ENCODE measurements at regions of chr15 and their contacts with region 1.

Region 1: GRCh38 chr15:66851226-66852071 is 149.4 kb downstream of the SMAD6 start:
- DNase-seq: peak; percentile 72
- ATAC-seq: peak; percentile 93
- H3K4me3 ChIP-seq: no peak overlapping the region
- H3K27ac ChIP-seq: no peak overlapping the region
- H3K4me1 ChIP-seq: peaks cover 16% of the 10 kb centered on the region
- H3K27me3 ChIP-seq: no peaks in the 10 kb centered on the region
- CTCF ChIP-seq: peak; percentile 78

Region 2: GRCh38 chr15:66558300-66558699 is 293.1 kb before region 1 on chr15:
- CTCF ChIA-PET with region 1: no interaction called
- POLR2A ChIA-PET with region 1: no interaction called
- intact Hi-C with region 1: no loop called
- DNase-seq: no peak
- ATAC-seq: no peak
- H3K4me3 ChIP-seq: no peak overlapping the region
- H3K27ac ChIP-seq: no peak overlapping the region
- H3K4me1 ChIP-seq: no peaks in the 10 kb centered on the region
- H3K27me3 ChIP-seq: no peaks in the 10 kb centered on the region
- CTCF ChIP-seq: no peak

Region 3: GRCh38 chr15:66603301-66604179 is 247.9 kb before region 1 on chr15:
- CTCF ChIA-PET with region 1: no interaction called
- POLR2A ChIA-PET with region 1: no interaction called
- intact Hi-C with region 1: loop called (anchors 1 kb)
- DNase-seq: peak; percentile 63
- ATAC-seq: peak; percentile 80
- H3K4me3 ChIP-seq: no peak overlapping the region
- H3K27ac ChIP-seq: no peak overlapping the region
- H3K4me1 ChIP-seq: no peaks in the 10 kb centered on the region
- H3K27me3 ChIP-seq: no peaks in the 10 kb centered on the region
- CTCF ChIP-seq: peak; percentile 74

Region 4: DNA sequence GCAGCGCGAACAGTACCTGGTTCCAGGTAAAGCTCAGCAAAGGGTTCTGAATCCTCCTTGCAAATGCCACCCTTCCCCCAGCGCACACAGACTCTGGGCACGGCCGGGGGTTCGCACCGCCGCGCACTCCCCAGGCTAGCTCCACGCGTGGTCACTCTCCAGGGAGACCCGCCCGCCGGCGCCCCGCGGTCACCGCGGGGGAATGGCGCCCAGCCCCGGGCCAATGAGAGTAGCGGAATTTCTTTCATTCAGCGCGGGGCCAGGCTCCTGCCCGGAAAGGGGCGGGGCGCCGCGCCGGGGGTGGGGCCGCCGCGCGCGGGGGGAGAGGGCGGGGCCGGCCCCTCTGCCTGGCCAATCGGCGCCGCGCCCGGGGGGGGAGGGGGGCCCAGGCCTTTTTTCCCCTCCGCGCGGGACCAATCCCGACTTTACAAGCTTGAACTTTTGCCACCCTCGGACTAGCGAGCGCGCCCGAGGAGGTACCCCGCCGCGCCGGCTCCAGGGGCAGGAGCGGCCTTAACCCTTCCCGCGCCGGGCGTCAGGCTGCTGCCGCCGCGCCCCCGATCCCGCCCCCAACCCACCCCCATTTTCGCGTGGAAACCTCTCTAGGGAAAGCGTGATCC is 150.5 kb before region 1 on chr15:
- CTCF ChIA-PET with region 1: interaction called, 5 read pairs
- POLR2A ChIA-PET with region 1: interaction called, 3 read pairs
- intact Hi-C with region 1: loop called (anchors 5 kb)
- DNase-seq: peak; percentile 94
- ATAC-seq: peak; percentile 53
- H3K4me3 ChIP-seq: peak overlapping the region; percentile 86
- H3K27ac ChIP-seq: peak overlapping the region; percentile 29; the same call in 1 of the 2 replicates
- H3K4me1 ChIP-seq: peaks cover 21% of the 10 kb centered on the region
- H3K27me3 ChIP-seq: no peaks in the 10 kb centered on the region
- CTCF ChIP-seq: no peak

Region 5: DNA sequence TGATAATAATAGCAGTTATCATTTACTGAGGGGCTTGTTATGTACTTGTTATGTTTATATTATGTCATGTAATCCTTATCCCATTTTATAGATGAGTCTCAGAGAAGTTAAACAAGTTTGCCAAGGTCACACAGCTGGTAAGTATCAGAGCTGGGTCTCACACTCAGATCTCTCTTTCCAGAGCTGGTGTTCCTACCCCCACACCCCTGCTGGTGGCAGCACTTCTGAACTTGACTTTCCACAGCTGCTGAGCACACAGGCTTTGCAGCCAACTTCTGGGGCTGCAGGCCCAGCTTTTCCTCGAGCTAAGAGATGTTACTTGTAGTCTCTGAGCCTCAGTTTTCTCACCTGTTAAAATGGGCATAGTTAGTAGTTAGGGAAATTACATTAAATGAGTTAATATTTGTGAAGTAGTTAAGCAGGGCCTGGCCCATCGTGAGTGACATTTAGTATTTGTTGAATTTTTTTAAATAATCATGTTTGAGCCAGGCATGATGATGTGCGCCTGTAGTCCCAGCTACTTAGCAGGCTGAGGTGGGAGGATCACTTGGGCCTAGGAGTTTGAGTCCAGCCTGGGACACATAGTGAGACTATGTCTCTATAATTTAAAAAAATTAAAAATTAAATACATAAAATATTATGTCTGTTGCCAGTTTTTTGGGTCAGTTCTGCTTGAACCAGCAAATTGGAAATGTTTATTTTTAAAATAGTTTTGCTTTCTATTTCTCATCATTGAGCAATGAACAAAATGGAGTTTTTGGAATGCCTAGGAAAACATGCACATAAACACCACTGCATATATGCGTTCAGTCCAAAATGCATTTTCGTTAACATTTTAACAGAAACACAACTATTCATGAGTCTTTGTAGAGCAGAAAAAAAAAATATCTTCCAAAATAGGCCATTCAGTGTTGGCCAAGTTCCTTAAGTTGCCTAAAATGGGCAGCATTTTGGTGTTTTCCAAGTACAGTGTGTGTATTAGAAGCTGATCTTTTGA is 62.1 kb before region 1 on chr15:
- CTCF ChIA-PET with region 1: interaction called, 22 read pairs
- POLR2A ChIA-PET with region 1: interaction called, 7 read pairs
- intact Hi-C with region 1: loop called (anchors 1 kb)
- DNase-seq: peak; percentile 61
- ATAC-seq: peak; percentile 88
- H3K4me3 ChIP-seq: no peak overlapping the region
- H3K27ac ChIP-seq: no peak overlapping the region
- H3K4me1 ChIP-seq: no peaks in the 10 kb centered on the region
- H3K27me3 ChIP-seq: no peaks in the 10 kb centered on the region
- CTCF ChIP-seq: peak; percentile 69

Region 6: DNA sequence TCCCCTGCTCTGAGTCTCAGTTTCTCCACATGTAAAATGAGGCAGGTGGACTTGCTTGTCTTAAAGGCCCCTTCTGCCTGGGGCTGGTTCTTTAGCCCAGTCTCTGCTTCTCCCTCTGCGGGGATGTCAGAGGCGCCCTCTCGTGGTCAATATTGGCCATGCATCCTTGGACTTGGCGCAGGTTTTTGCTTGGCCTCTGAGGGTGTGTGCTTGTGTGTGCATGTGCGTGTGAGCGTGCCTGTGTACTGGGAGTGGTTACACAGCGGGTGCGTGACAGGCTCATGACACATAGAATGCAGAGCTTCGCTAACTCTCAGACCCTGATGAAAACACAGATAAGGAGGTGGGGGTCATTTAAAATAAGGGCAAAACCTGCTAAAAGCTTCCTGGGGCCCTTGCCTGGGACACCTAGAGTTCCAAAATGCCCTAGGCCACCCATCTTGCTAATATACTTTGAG is 11.5 kb after region 1 on chr15:
- CTCF ChIA-PET with region 1: interaction called, 12 read pairs
- POLR2A ChIA-PET with region 1: no interaction called
- intact Hi-C with region 1: no loop called
- DNase-seq: peak; percentile 94
- ATAC-seq: peak; percentile 92
- H3K4me3 ChIP-seq: no peak overlapping the region
- H3K27ac ChIP-seq: peak overlapping the region; percentile 65
- H3K4me1 ChIP-seq: peaks cover 18% of the 10 kb centered on the region
- H3K27me3 ChIP-seq: no peaks in the 10 kb centered on the region
- CTCF ChIP-seq: peak; percentile 87

Measured in PC-3 (cell line).